ENCODE measurements at regions of chr4 and their contacts with region 1.

Region 1: GRCh38 chr4:2468445-2469192 is at the start of gene RNF4:
- DNase-seq: peak; percentile 99
- ATAC-seq: peak; percentile 87
- H3K4me3 Mint-ChIP-seq: peak within 1 kb of the TSS; percentile 96
- H3K27ac Mint-ChIP-seq: peak within 1 kb of the TSS; percentile 99
- H3K4me1 Mint-ChIP-seq: peaks cover 40% of the 10 kb centered on the region
- H3K27me3 Mint-ChIP-seq: no peaks in the 10 kb centered on the region
- CTCF ChIP-seq: no peak
- total RNA-seq, gene RNF4: 94.6 to 96.2 TPM

Region 2: GRCh38 chr4:2116687-2117400 is 351.8 kb before region 1 on chr4:
- CTCF ChIA-PET with region 1: no interaction called
- POLR2A ChIA-PET with region 1: no interaction called
- intact Hi-C with region 1: no loop called
- DNase-seq: no peak
- ATAC-seq: no peak
- H3K4me3 Mint-ChIP-seq: no peak overlapping the region
- H3K27ac Mint-ChIP-seq: no peak overlapping the region
- H3K4me1 Mint-ChIP-seq: no peaks in the 10 kb centered on the region
- H3K27me3 Mint-ChIP-seq: no peaks in the 10 kb centered on the region
- CTCF ChIP-seq: no peak

Region 3: DNA sequence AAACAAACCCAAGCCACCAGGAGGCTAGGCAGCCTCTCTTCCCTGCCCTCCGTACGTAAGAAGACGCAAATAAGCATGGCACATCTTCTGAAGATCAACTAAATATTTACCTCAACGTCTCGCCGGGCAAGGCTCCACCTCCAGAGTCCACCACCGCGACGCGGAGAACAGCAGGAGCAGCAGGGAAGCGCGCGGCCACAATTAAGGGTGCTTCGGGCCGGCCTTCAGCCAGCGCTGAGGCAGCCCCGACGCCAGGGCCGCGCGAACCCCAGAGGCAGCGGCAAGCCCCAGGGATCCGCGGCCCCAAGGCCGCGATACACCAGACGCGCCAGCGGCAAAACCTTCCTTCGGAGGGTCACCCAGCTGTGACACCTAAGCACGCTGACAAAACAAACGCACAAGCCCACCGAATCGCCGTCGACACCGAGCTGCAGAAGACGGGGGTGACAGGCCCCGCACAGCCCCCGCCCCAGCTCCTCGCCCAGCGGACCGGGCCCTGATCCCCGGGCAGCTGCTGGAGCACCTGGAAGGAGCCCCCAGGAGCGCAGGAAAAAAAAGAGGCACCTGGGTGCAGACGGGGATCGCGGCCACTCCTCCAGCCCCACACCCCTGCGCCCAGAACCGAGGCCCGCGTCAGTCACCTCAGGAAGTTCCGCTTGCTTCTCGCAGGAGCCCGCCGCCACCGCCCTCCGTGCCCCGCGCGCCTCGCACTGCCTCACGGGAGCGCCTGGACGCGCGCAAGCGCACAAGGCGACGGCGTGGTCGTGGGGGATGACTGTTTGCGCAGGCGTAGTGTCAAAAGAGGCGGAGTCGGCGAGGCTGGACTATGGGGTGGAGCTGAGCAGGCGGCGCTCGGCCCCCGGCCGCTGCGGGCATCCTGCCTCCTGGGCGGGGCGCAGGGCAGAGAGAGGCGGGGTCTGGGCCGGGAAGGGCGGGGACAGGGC is 226.9 kb before region 1 on chr4 and contains the starts of genes HAUS3 and POLN:
- CTCF ChIA-PET with region 1: interaction called, 3 read pairs
- POLR2A ChIA-PET with region 1: interaction called, 17 read pairs
- intact Hi-C with region 1: no loop called
- DNase-seq: peak; percentile 99
- ATAC-seq: peak; percentile 98
- H3K4me3 Mint-ChIP-seq: peak within 1 kb of the TSS; percentile 83
- H3K27ac Mint-ChIP-seq: peak within 1 kb of the TSS; percentile 88
- H3K4me1 Mint-ChIP-seq: peaks cover 55% of the 10 kb centered on the region
- H3K27me3 Mint-ChIP-seq: no peaks in the 10 kb centered on the region
- CTCF ChIP-seq: no peak
- total RNA-seq, gene HAUS3: 18.4 to 19.5 TPM
- total RNA-seq, gene POLN: 2.1 to 2.9 TPM

Region 4: GRCh38 chr4:2441393-2442174 is 27.0 kb before region 1 on chr4:
- CTCF ChIA-PET with region 1: interaction called, 15 read pairs
- POLR2A ChIA-PET with region 1: interaction called, 5 read pairs
- intact Hi-C with region 1: no loop called
- DNase-seq: peak; percentile 94
- ATAC-seq: peak; percentile 100
- H3K4me3 Mint-ChIP-seq: no peak overlapping the region
- H3K27ac Mint-ChIP-seq: peak overlapping the region; percentile 49
- H3K4me1 Mint-ChIP-seq: peaks cover 4% of the 10 kb centered on the region
- H3K27me3 Mint-ChIP-seq: no peaks in the 10 kb centered on the region
- CTCF ChIP-seq: peak; percentile 98

Region 5: GRCh38 chr4:2484993-2485392 is 16.4 kb after region 1 on chr4:
- CTCF ChIA-PET with region 1: interaction called, 5 read pairs
- POLR2A ChIA-PET with region 1: interaction called, 53 read pairs
- intact Hi-C with region 1: no loop called
- DNase-seq: peak; percentile 81
- ATAC-seq: peak; percentile 87
- H3K4me3 Mint-ChIP-seq: peak overlapping the region; percentile 38
- H3K27ac Mint-ChIP-seq: peak overlapping the region; percentile 79
- H3K4me1 Mint-ChIP-seq: peaks cover 84% of the 10 kb centered on the region
- H3K27me3 Mint-ChIP-seq: no peaks in the 10 kb centered on the region
- CTCF ChIP-seq: no peak

Region 6: GRCh38 chr4:2741626-2742025 is 273.0 kb after region 1 on chr4:
- CTCF ChIA-PET with region 1: no interaction called
- POLR2A ChIA-PET with region 1: no interaction called
- intact Hi-C with region 1: no loop called
- DNase-seq: no peak
- ATAC-seq: no peak
- H3K4me3 Mint-ChIP-seq: no peak overlapping the region
- H3K27ac Mint-ChIP-seq: peak overlapping the region; percentile 44
- H3K4me1 Mint-ChIP-seq: peaks cover 26% of the 10 kb centered on the region
- H3K27me3 Mint-ChIP-seq: no peaks in the 10 kb centered on the region
- CTCF ChIP-seq: no peak

Measured in activated CD8-positive, alpha-beta T cell treated with anti-CD3 and anti-CD28 coated beads for 36 hours (primary cell).